ENCODE measurements at regions of chr7 and their contacts with region 1.

Region 1: DNA sequence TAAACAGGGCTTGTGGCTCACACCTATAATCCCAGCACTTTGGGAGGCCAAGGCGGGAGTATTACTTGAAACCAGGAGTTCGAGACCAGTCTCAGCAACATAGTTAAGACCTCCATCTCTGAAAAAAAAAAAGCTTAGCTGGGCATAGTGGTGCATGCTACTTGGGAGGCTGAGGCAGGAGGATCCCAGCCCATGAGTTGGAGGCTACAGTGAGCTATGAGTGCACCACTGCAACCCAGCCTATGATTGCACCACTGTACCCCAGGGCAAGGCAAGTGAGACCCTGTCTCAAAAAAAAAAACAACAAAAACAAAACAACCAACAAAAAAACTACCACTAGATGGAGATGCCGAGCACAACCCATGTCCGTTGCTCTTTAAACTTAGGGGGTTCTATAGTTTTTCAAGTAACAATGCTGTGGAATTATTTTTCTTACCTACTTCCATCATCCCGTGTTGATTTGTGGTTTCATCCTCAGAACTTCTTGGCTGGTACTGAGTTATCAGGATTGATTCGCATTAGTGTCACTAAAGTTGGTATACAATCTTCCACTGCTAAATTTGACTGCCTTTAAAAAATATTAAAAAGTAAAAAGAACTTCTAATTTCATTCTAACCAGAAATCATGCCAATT is 12.2 kb upstream of the REPIN1 start:
- DNase-seq: peak; percentile 69 to 76 (median 70)
- ATAC-seq: peak; percentile 52
- H3K4me3 ChIP-seq: no peak overlapping the region
- H3K27ac ChIP-seq: no peak overlapping the region
- H3K4me1 ChIP-seq: peaks cover 30 to 34% of the 10 kb centered on the region in 2 experiments; a peak in 4 of 5 replicates
- H3K27me3 ChIP-seq: no peaks in the 10 kb centered on the region; a peak in 1 of 5 replicates
- CTCF ChIP-seq: peak; percentile 79 to 89 (median 89)
- EP300 ChIP-seq: no peak
- POLR2A ChIP-seq: no peak
- RAD21 ChIP-seq: peak; percentile 55 to 66

Region 2: DNA sequence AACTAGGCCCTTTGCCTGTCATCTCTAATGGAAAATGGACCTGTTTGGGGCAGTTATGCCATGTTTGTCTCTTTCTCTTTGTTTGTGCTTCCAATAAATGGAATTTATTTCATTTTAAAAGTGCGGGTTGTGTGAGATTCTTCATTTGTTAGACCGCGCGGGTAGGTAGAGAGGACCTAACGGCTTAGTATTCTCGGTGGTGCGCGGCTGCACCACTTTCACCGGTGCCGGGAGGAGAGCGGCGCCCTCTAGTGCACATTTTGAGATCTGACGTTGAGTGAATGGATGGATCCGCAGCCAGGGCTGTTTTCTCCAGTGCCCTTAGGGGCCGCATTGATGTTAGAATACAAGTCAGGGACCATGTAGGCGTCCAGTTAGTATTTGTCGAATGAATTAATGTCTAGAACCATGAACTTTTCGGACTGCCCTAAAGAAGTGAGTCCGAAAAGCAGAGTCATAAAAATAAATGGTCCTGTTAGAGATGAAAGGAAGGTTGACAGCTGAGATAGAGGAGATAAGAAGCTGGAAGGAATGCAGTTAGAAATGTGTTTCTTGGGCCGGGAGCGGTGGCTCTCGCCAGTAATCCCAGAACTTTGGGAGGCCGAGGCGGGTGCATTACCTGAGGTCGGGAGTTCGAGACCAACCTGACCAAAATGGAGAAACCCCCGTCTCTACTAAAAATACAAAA is 64.8 kb after region 1 on chr7:
- CTCF ChIA-PET with region 1: interaction called, 16 read pairs
- POLR2A ChIA-PET with region 1: interaction called, 4 read pairs
- in situ Hi-C with region 1: no loop called
- intact Hi-C with region 1: loop called (anchors 1 kb)
- DNase-seq: peak; percentile 93 to 96 (median 94)
- ATAC-seq: peak; percentile 99
- H3K4me3 ChIP-seq: no peak overlapping the region
- H3K27ac ChIP-seq: no peak overlapping the region
- H3K4me1 ChIP-seq: peaks cover 3 to 7% of the 10 kb centered on the region in 2 experiments; a peak in 3 of 5 replicates
- H3K27me3 ChIP-seq: no peaks in the 10 kb centered on the region
- CTCF ChIP-seq: peak; percentile 98 to 99 (median 99)
- EP300 ChIP-seq: peak; percentile 13; the same call in 1 of the 2 replicates
- POLR2A ChIP-seq: no peak
- RAD21 ChIP-seq: peak; percentile 98 to 99

Region 3: GRCh38 chr7:150466477-150466876 is 110.1 kb after region 1 on chr7:
- CTCF ChIA-PET with region 1: no interaction called
- POLR2A ChIA-PET with region 1: no interaction called
- in situ Hi-C with region 1: no loop called
- intact Hi-C with region 1: no loop called
- DNase-seq: no peak
- ATAC-seq: no peak
- H3K4me3 ChIP-seq: no peak overlapping the region
- H3K27ac ChIP-seq: no peak overlapping the region
- H3K4me1 ChIP-seq: no peaks in the 10 kb centered on the region
- H3K27me3 ChIP-seq: peaks cover 22 to 26% of the 10 kb centered on the region in 2 experiments; a peak in 4 of 5 replicates
- CTCF ChIP-seq: no peak
- EP300 ChIP-seq: no peak
- POLR2A ChIP-seq: no peak
- RAD21 ChIP-seq: no peak

Region 4: GRCh38 chr7:150753826-150754603 is 397.6 kb after region 1 on chr7:
- CTCF ChIA-PET with region 1: no interaction called
- POLR2A ChIA-PET with region 1: no interaction called
- in situ Hi-C with region 1: no loop called
- intact Hi-C with region 1: loop called (anchors 10 kb)
- DNase-seq: peak in 3 of 4 experiments; percentile 25 to 56 (median 39)
- ATAC-seq: peak; percentile 92
- H3K4me3 ChIP-seq: no peak overlapping the region
- H3K27ac ChIP-seq: no peak overlapping the region
- H3K4me1 ChIP-seq: no peaks in the 10 kb centered on the region
- H3K27me3 ChIP-seq: peaks cover 5 to 17% of the 10 kb centered on the region in 2 experiments
- CTCF ChIP-seq: peak; percentile 71 to 82 (median 73)
- EP300 ChIP-seq: no peak
- POLR2A ChIP-seq: no peak
- RAD21 ChIP-seq: peak; percentile 73 to 81